ENCODE measurements at regions of chrX and their contacts with region 1.

Region 1: GRCh38 chrX:39745818-39746217 is 351.9 kb downstream of the BCOR start:
- DNase-seq: no peak

Region 2: DNA sequence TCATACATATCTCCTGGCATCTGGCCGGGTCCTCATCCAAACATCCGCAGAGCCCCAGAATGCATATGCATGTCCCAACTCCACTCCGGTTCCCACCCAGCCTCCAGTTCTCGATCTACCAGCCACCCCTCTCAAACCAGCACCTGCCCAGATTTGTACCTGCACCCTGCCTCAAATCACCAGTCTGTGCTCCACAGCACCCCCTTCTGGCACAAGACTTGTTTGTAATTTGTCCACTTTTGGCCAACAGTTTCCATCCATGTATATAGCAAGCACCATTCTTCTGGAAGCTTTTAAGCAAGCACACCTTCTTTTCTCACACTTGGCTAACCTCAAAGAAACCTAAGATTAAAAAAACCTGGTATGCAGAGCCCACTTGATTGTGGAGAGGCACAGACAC is 300.5 kb before region 1 on chrX:
- CTCF ChIA-PET with region 1: interaction called, 13 read pairs
- POLR2A ChIA-PET with region 1: no interaction called
- DNase-seq: peak; percentile 44

Region 3: DNA sequence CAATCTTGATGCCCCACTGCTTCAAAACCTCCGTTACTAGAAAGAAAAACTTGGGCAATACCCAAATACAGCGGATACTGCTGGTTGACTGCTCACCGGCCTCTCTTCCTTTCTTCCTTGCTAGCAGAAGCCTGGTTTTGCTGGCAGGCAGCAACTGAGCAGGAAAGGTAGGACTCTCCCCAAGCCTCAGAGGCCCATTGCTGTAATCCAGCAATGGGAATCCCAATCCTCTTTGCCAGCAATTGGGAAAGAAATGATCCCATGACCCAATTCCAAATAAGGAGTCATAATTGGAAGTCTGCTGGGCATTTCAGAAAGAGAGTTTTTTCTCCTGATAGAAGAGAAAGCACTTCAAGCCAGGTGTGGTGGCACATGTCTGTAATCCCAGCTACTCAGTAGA is 42.5 kb before region 1 on chrX:
- CTCF ChIA-PET with region 1: no interaction called
- POLR2A ChIA-PET with region 1: no interaction called
- DNase-seq: no peak